ENCODE measurements at regions of chr9 and their contacts with region 1.

Region 1: GRCh38 chr9:120842690-120843499 is at the start of gene PSMD5:
- DNase-seq: peak; percentile 98
- H3K4me3 Mint-ChIP-seq: peak within 1 kb of the TSS; percentile 98
- H3K27ac Mint-ChIP-seq: peak within 1 kb of the TSS; percentile 96
- H3K4me1 Mint-ChIP-seq: peaks cover 73% of the 10 kb centered on the region
- H3K27me3 Mint-ChIP-seq: no peaks in the 10 kb centered on the region
- total RNA-seq, gene PSMD5: 57.7 and 59.2 TPM in 2 replicates

Region 2: GRCh38 chr9:120755827-120756434 is 87.0 kb before region 1 on chr9:
- intact Hi-C with region 1: loop called (anchors 2 kb)
- DNase-seq: peak; percentile 53
- H3K4me3 Mint-ChIP-seq: no peak overlapping the region
- H3K27ac Mint-ChIP-seq: no peak overlapping the region
- H3K4me1 Mint-ChIP-seq: peaks cover 30% of the 10 kb centered on the region
- H3K27me3 Mint-ChIP-seq: no peaks in the 10 kb centered on the region

Region 3: GRCh38 chr9:120792898-120793765 is 49.8 kb before region 1 on chr9 and contains the start of gene FBXW2:
- intact Hi-C with region 1: loop called (anchors 1 kb)
- DNase-seq: peak; percentile 90
- H3K4me3 Mint-ChIP-seq: peak within 1 kb of the TSS; percentile 98
- H3K27ac Mint-ChIP-seq: peak within 1 kb of the TSS; percentile 98
- H3K4me1 Mint-ChIP-seq: peaks cover 48% of the 10 kb centered on the region
- H3K27me3 Mint-ChIP-seq: no peaks in the 10 kb centered on the region
- total RNA-seq, gene FBXW2: 82.2 and 85.0 TPM in 2 replicates

Region 4: GRCh38 chr9:120868676-120869359 is 25.9 kb after region 1 on chr9:
- intact Hi-C with region 1: loop called (anchors 1 kb)
- DNase-seq: peak; percentile 93
- H3K4me3 Mint-ChIP-seq: peak overlapping the region; percentile 88
- H3K27ac Mint-ChIP-seq: peak overlapping the region; percentile 91
- H3K4me1 Mint-ChIP-seq: peaks cover 48% of the 10 kb centered on the region
- H3K27me3 Mint-ChIP-seq: no peaks in the 10 kb centered on the region

Region 5: DNA sequence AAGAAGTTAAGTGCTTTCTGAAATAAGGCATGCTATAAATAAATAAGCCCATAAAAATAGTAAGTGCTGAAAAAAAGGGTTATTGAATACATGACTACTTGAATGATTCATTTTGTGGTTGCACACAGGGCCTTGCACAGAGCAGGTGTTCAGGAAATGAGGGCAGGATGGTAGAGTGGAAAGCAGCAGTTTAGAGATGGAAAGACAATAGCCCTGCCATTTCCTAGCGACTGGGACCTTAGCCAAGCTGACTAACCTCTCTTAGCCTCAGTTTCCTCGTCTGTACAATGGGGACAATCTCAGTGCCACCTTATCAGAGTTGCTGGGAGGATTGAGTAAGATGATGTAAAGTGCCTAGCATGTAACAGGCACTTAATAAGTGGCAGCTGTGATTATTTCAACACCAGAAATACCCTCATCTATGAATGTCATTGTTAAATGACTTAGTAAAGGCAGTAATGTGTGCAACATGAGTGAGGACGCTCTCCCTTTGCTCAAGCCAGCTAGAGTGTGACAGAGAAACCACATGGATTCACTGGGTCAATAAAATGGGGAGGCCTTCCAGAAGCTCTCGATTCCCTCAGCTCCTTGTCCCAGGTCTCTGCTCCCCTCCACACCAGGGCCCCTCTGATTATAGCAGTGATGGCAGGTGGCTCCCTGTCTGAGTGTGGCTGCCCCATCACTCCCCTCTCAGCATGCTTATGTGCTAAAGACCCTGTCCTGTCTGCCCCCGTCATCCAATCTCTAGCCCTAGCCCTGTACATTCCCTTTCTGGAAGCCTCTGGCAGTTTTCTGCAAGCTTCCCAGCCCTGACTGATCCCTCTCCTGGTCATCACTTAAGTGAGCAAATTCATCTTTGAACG is 50.1 kb after region 1 on chr9:
- intact Hi-C with region 1: loop called (anchors 1 kb)
- DNase-seq: peak; percentile 62
- H3K4me3 Mint-ChIP-seq: peak overlapping the region; percentile 69
- H3K27ac Mint-ChIP-seq: peak overlapping the region; percentile 99
- H3K4me1 Mint-ChIP-seq: peaks cover 74% of the 10 kb centered on the region
- H3K27me3 Mint-ChIP-seq: no peaks in the 10 kb centered on the region

Region 6: GRCh38 chr9:121074635-121075385 is 231.9 kb after region 1 on chr9 and contains the start of gene CNTRL:
- intact Hi-C with region 1: loop called (anchors 2 kb)
- DNase-seq: peak; percentile 90
- H3K4me3 Mint-ChIP-seq: peak within 1 kb of the TSS; percentile 100
- H3K27ac Mint-ChIP-seq: peak within 1 kb of the TSS; percentile 91
- H3K4me1 Mint-ChIP-seq: peaks cover 57% of the 10 kb centered on the region
- H3K27me3 Mint-ChIP-seq: no peaks in the 10 kb centered on the region
- total RNA-seq, gene CNTRL: 69.9 and 74.2 TPM in 2 replicates

Region 7: DNA sequence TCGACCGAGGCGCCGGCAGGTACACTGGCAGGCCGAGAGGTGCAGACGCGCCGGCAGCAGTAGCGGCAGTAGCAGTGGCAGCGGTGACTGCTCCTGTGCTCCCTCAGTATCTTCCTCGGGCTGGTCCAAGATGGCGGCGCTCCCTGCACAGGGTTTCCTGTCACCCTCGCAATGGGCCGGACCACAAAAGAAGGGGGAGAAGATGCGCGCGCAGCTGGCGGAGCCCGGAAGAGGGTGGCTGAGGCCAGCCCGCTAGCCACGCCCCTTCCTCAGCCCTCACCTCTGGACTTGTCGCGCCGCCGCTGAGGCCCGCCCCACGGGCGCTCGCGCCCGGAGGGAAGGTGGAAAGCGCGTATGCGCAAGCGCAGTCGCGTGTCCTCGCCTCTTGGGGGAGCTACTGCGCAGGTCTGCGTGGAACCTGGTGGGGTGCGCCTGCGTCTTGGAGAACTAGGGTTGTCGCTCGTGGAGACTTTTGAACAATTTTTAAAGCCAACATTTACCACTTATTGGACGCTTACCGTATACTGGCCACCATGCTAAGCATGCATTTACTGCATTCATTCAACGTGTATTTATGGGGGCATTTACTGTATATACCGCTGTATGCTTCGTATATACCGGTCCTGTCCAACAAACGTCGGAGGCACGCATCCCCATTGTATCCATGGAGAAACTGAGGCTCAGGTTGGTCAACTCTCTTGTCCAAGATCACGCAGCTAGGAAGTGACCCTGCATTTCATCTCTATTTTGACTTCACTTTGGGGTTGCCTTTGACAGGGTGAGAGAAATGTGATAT is 359.0 kb after region 1 on chr9 and contains the start of gene RAB14:
- intact Hi-C with region 1: loop called (anchors 2 kb)
- DNase-seq: peak; percentile 100
- H3K4me3 Mint-ChIP-seq: peak within 1 kb of the TSS; percentile 96
- H3K27ac Mint-ChIP-seq: peak within 1 kb of the TSS; percentile 92
- H3K4me1 Mint-ChIP-seq: peaks cover 61% of the 10 kb centered on the region
- H3K27me3 Mint-ChIP-seq: no peaks in the 10 kb centered on the region
- total RNA-seq, gene RAB14: 64.8 and 69.3 TPM in 2 replicates

Measured in activated T-helper 1 cell treated with anti-CD3 and anti-CD28 coated beads, Interleukin-12 subunit alpha, Interleukin-12 subunit beta, Interleukin-2, Interleukin-4 antibody, amounts not matched to agents 30 ng/mL and 10 ng/mL and 1 ng/mL, durations not matched to agents 14 hours and 24 hours and 36 hours (primary cell).